ENCODE measurements at regions of chr12 and their contacts with region 1.

Region 1: GRCh38 chr12:113422030-113422885 is at the start of gene SDSL:
- DNase-seq: peak; percentile 21
- H3K4me3 ChIP-seq: peak within 1 kb of the TSS; percentile 75
- CTCF ChIP-seq: no peak

Region 2: DNA sequence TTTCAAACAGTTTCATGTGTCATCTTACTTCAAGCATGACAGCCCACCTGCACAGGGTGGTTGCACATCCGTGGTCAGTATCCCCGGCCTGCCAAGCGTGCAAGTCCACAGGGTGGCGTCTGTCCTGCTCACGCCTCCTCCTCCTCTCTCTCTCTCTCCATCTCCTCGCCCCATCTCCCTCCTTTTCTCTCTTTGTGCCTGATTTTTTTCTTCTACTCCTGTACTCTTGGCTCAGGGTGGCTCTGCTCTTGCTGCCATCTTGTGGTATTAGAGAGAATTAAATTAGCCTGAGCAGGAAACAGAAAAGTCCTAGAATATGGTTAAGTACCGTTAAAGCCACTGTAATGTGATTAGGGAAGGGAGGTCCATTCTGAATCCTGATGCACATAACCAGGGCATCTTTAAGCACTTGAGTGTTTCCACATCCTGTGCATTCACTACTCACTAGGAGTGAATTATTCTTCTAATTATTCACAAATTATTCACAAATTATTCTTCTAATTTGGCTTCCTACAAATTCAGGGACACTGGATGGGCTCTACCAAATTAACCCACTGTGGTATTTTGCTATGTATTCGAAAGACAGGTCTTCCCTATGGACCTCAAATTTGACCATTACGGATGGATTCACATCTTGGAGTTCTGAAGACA is 391.3 kb before region 1 on chr12:
- CTCF ChIA-PET with region 1: no interaction called
- POLR2A ChIA-PET with region 1: no interaction called
- DNase-seq: peak; percentile 9
- H3K4me3 ChIP-seq: no peak overlapping the region
- CTCF ChIP-seq: peak; percentile 61

Region 3: DNA sequence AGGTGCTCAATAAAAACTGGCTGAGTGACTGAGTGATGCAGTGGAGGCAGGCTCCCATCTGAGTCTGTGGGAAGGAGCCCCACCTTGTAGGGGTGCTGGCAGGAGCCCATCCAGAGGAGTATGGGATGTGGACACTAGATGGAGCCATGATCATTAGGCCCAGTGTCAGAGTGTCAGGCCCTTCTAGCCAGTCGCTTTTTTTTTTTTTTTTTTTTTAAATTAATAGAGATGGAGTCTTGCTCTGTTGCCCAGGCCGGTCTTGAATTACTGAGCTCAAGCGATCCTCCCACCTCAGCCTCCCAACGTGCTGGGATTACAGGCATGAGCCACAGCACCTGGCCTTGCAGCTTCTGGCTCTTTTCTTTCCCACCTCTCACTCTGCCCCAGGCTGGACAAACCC is 225.3 kb before region 1 on chr12:
- CTCF ChIA-PET with region 1: interaction called, 38 read pairs
- POLR2A ChIA-PET with region 1: no interaction called
- DNase-seq: no peak
- H3K4me3 ChIP-seq: no peak overlapping the region
- CTCF ChIP-seq: peak; percentile 75

Region 4: GRCh38 chr12:113329022-113329790 is 93.1 kb before region 1 on chr12:
- CTCF ChIA-PET with region 1: interaction called, 10 read pairs
- POLR2A ChIA-PET with region 1: no interaction called
- DNase-seq: no peak
- H3K4me3 ChIP-seq: no peak overlapping the region
- CTCF ChIP-seq: no peak

Region 5: GRCh38 chr12:113403435-113404415 is 18.5 kb before region 1 on chr12 and contains the start of gene SDS:
- CTCF ChIA-PET with region 1: interaction called, 23 read pairs
- POLR2A ChIA-PET with region 1: interaction called, 4 read pairs
- DNase-seq: no peak
- H3K4me3 ChIP-seq: no peak within 1 kb of the TSS
- CTCF ChIP-seq: no peak

Region 6: GRCh38 chr12:113445544-113446171 is 23.4 kb after region 1 on chr12:
- CTCF ChIA-PET with region 1: interaction called, 16 read pairs
- POLR2A ChIA-PET with region 1: no interaction called
- DNase-seq: no peak
- H3K4me3 ChIP-seq: no peak overlapping the region
- CTCF ChIP-seq: no peak

Region 7: GRCh38 chr12:113678223-113679119 is 256.2 kb after region 1 on chr12:
- CTCF ChIA-PET with region 1: no interaction called
- POLR2A ChIA-PET with region 1: no interaction called
- DNase-seq: no peak
- H3K4me3 ChIP-seq: no peak overlapping the region
- CTCF ChIP-seq: no peak